ENCODE measurements at regions of chr10 and their contacts with region 1.

Region 1: DNA sequence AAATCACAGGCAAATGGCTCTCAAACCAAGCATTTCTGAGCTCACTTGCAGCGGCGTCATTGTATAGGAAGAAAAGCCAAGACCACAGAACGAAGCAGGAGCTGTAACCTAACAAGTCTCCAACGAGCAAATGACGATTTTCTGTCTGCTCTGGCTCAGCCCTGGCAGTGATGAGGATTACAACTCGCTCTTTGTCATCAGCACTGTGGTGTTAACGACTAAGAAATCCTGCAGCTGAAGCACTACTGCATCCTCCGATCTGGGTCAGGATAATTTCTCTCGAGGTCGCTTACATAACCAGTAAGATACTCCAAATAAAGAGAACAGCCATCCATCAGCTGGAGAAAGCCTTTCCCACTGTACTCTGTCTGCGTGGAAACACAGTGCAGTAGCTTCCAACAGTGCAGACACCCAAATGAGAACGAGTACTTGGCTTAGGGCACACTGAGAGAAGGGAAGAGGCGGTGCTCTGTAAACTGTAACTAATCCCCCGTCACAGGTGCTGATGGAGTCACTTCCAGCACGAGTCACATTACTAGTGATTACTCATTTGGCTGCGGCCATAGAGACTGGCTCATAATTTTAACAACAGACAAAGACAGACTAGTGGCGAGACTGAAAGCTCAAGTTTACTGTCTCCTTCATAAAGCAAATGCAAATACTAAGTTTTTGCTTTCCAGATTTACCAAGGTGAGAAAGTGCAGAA is 135.8 kb downstream of the NRBF2 start:
- DNase-seq: peak; percentile 89
- ATAC-seq: peak; percentile 92
- H3K4me3 Mint-ChIP-seq: peak overlapping the region; percentile 86
- H3K27ac Mint-ChIP-seq: peak overlapping the region; percentile 96
- H3K4me1 Mint-ChIP-seq: peaks cover 17% of the 10 kb centered on the region
- H3K27me3 Mint-ChIP-seq: no peaks in the 10 kb centered on the region
- CTCF ChIP-seq: no peak

Region 2: DNA sequence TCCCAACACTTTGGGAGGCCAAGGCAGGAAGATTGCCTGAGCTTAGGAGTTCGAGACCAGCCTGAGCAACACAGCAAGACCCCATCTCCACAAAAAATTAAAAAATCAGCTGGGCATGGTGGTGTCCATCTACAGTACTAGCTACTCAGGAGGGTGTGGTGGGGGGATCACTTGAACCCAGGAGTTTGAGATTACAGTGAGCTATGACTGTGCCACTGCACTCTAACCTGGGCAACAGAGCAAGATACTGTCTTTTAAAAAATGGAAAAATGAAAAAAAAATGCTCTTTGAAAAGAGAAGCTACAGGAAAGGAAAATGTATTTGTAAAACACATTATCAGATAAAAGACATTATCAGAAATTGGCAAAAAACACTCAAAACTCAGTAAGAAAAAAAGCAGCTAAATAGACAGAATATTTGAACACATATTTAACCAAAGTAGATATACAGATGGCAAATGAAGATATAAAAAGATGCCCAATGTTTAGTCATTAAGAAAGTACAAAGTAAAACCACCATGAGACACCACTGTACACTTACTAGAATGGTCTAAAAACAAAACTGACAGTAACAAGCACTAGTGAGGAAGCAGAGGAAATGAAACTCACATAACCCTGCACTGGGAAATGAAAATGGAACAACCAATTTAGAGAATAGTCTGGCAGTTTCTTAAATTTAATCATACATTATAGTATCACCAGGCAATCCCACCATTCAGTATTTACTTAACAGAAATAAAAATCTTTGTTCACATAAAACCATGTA is 95.3 kb before region 1 on chr10:
- CTCF ChIA-PET with region 1: interaction called, 4 read pairs
- POLR2A ChIA-PET with region 1: no interaction called
- intact Hi-C with region 1: loop called (anchors 10 kb)
- DNase-seq: no peak
- ATAC-seq: peak; percentile 96
- H3K4me3 Mint-ChIP-seq: no peak overlapping the region
- H3K27ac Mint-ChIP-seq: peak overlapping the region; percentile 82
- H3K4me1 Mint-ChIP-seq: peaks cover 65% of the 10 kb centered on the region
- H3K27me3 Mint-ChIP-seq: no peaks in the 10 kb centered on the region
- CTCF ChIP-seq: no peak

Region 3: DNA sequence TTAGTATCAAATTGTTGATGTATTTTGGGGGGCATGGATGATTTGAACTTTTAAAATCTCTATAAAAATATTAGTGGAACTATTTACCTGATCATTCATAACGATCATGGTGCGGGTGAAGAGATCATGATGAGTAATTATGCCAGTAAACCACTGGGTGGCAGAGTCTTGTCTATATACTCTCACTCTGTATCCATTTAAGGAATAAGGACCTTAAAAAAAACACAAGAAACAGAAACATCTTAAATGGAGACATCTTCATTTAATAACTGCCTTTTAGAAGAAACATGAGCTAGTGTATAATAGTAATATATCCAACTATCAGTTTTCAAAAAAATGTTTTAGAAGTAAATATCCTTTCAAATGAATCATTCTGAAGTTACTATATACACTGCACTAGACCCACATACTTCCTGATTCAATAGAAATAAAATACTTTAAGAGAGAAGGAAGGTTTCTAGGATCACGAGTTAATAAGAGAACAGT is 51.8 kb before region 1 on chr10:
- CTCF ChIA-PET with region 1: interaction called, 9 read pairs
- POLR2A ChIA-PET with region 1: no interaction called
- intact Hi-C with region 1: loop called (anchors 2 kb)
- DNase-seq: peak; percentile 21
- ATAC-seq: peak; percentile 88
- H3K4me3 Mint-ChIP-seq: no peak overlapping the region
- H3K27ac Mint-ChIP-seq: peak overlapping the region; percentile 32
- H3K4me1 Mint-ChIP-seq: peaks cover 60% of the 10 kb centered on the region
- H3K27me3 Mint-ChIP-seq: no peaks in the 10 kb centered on the region
- CTCF ChIP-seq: peak; percentile 78

Region 4: GRCh38 chr10:63224241-63224640 is 44.7 kb before region 1 on chr10:
- CTCF ChIA-PET with region 1: interaction called, 8 read pairs
- POLR2A ChIA-PET with region 1: interaction called, 10 read pairs
- intact Hi-C with region 1: no loop called
- DNase-seq: no peak
- ATAC-seq: no peak
- H3K4me3 Mint-ChIP-seq: no peak overlapping the region
- H3K27ac Mint-ChIP-seq: no peak overlapping the region
- H3K4me1 Mint-ChIP-seq: peaks cover 67% of the 10 kb centered on the region
- H3K27me3 Mint-ChIP-seq: no peaks in the 10 kb centered on the region
- CTCF ChIP-seq: no peak

Region 5: DNA sequence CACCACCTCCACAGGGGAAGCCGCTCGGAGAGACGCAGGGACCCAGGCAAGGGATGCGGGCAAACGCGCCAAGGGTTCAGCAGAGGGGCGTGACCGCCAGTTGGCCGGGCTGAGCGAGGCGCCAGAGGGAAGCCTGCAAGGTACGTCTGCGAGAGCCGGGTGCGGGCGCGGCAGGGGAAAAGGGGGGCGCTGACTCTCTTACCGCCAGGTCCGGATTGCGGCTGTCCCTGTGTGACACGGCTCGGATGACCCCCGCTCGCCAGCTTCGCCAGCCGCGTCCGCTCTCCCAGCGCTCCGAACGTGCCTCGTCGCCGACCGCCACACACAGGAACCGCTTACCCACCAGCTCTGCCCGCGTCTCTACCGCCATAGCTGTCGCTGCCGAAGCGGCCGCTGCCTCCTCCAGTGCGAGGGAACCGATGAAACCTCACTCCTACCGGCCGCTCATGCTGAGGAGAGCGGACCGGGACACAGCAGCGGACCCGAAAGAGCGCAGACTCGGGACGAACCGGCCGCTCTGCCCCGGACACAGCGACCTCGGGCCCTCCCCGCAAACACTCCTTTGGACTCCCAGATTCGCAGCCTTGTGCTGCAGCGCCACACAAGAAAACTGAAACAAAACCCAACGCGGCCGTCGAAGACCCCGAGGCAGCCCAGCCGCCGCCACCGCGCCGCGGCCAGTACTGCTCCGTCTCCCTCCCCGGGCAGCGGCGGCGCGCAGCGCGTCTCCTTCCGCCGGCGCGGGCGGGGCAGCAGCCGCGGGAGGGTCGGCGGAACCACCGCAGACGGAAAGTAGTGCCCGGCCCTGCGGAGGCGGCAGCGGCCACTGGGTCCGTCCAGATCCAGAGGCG is 196.6 kb after region 1 on chr10 and contains the start of gene JMJD1C:
- CTCF ChIA-PET with region 1: no interaction called
- POLR2A ChIA-PET with region 1: interaction called, 5 read pairs
- intact Hi-C with region 1: loop called (anchors 5 kb)
- DNase-seq: peak; percentile 69
- ATAC-seq: peak; percentile 77
- H3K4me3 Mint-ChIP-seq: peak within 1 kb of the TSS; percentile 94
- H3K27ac Mint-ChIP-seq: peak within 1 kb of the TSS; percentile 75
- H3K4me1 Mint-ChIP-seq: peaks cover 24% of the 10 kb centered on the region
- H3K27me3 Mint-ChIP-seq: no peaks in the 10 kb centered on the region
- CTCF ChIP-seq: no peak
- total RNA-seq, gene JMJD1C: 45.2 to 48.1 TPM

Region 6: GRCh38 chr10:63521416-63522276 is 252.7 kb after region 1 on chr10:
- CTCF ChIA-PET with region 1: no interaction called
- POLR2A ChIA-PET with region 1: interaction called, 11 read pairs
- intact Hi-C with region 1: loop called (anchors 2 kb)
- DNase-seq: peak; percentile 60
- ATAC-seq: peak; percentile 65
- H3K4me3 Mint-ChIP-seq: peak overlapping the region; percentile 88
- H3K27ac Mint-ChIP-seq: peak overlapping the region; percentile 92
- H3K4me1 Mint-ChIP-seq: peaks cover 51% of the 10 kb centered on the region
- H3K27me3 Mint-ChIP-seq: no peaks in the 10 kb centered on the region
- CTCF ChIP-seq: no peak

Region 7: GRCh38 chr10:63629363-63630084 is 360.6 kb after region 1 on chr10:
- CTCF ChIA-PET with region 1: interaction called, 4 read pairs
- POLR2A ChIA-PET with region 1: interaction called, 5 read pairs
- intact Hi-C with region 1: loop called (anchors 5 kb)
- DNase-seq: peak; percentile 92
- ATAC-seq: peak; percentile 74
- H3K4me3 Mint-ChIP-seq: peak overlapping the region; percentile 78
- H3K27ac Mint-ChIP-seq: peak overlapping the region; percentile 86
- H3K4me1 Mint-ChIP-seq: peaks cover 25% of the 10 kb centered on the region
- H3K27me3 Mint-ChIP-seq: peaks cover 3% of the 10 kb centered on the region
- CTCF ChIP-seq: peak; percentile 90

Measured in activated CD8-positive, alpha-beta T cell treated with anti-CD3 and anti-CD28 coated beads for 36 hours (primary cell).